PC-9 (cell line): ENCODE measurements at regions of chr7 and their contacts with region 1.

Region 1: DNA sequence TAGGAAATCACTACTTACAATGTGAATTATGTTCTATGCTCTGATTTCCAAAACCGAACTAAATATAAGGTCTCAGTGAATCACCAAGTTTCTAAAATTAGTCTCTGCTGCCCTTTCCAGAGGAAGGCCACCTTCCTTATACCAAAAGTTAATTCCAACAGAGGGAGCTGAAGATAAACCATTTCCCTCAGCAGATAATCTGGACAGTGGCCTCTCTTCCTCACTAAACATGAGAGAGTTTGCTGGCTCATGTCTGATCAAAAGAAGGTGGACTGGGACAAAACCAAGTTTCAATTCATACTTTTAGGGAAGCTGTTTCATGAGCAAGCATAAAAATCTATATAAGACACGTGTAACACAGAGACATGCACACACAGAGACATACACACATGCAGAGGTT is 6.4 kb downstream of the FEZF1 start:
- DNase-seq: no peak
- H3K4me3 ChIP-seq: no peak overlapping the region
- H3K27ac ChIP-seq: no peak overlapping the region
- H3K4me1 ChIP-seq: no peaks in the 10 kb centered on the region
- H3K27me3 ChIP-seq: no peaks in the 10 kb centered on the region
- CTCF ChIP-seq: no peak

Region 2: DNA sequence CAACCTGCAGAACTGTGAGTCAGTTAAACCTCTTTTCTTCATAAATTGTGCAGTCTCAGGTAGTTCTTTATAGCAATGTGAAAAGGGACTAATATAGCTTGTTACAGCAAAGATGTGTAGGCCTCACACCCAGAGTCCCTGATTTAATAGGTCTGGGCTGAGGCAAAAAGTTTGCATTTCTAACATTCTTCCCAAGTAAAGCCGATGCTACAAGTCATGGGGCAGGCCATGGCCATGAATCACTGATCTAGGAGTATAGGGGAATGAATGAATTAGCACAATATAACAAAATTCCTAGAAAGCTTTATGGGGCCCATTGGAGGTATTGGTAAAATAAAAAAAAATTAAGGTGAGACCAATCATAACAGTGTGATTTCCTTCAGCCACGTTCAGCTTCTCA is 142.6 kb before region 1 on chr7:
- CTCF ChIA-PET with region 1: no interaction called
- POLR2A ChIA-PET with region 1: interaction called, 15 read pairs
- intact Hi-C with region 1: no loop called
- DNase-seq: no peak
- H3K4me3 ChIP-seq: no peak overlapping the region
- H3K27ac ChIP-seq: no peak overlapping the region
- H3K4me1 ChIP-seq: no peaks in the 10 kb centered on the region
- H3K27me3 ChIP-seq: no peaks in the 10 kb centered on the region
- CTCF ChIP-seq: no peak